ENCODE measurements at regions of chr17 and their contacts with region 1.

Region 1: GRCh38 chr17:67491009-67491680 is 114.1 kb downstream of the PITPNC1 start:
- DNase-seq: peak; percentile 72
- H3K4me3 ChIP-seq: peak overlapping the region in 1 of 4 donors; percentile 7
- H3K27ac ChIP-seq: peak overlapping the region; percentile 46 to 67 (median 56)
- H3K4me1 ChIP-seq: peaks cover 0 to 25% (median 5%) of the 10 kb centered on the region in 4 donors
- H3K27me3 ChIP-seq: no peaks in the 10 kb centered on the region
- CTCF ChIP-seq: no peak
- EP300 ChIP-seq: peak; percentile 95
- POLR2A ChIP-seq: no peak

Region 2: GRCh38 chr17:67293251-67294203 is 197.6 kb before region 1 on chr17:
- in situ Hi-C with region 1: no loop called
- intact Hi-C with region 1: no loop called
- DNase-seq: peak; percentile 74
- H3K4me3 ChIP-seq: peak overlapping the region in 1 of 4 donors; percentile 18
- H3K27ac ChIP-seq: no peak overlapping the region
- H3K4me1 ChIP-seq: peaks cover 0 to 14% (median 0%) of the 10 kb centered on the region in 4 donors
- H3K27me3 ChIP-seq: no peaks in the 10 kb centered on the region
- CTCF ChIP-seq: peak; percentile 68 to 83 (median 77)
- EP300 ChIP-seq: no peak
- POLR2A ChIP-seq: no peak

Region 3: GRCh38 chr17:67733371-67733940 is 242.3 kb after region 1 on chr17:
- in situ Hi-C with region 1: no loop called
- intact Hi-C with region 1: no loop called
- DNase-seq: no peak
- H3K4me3 ChIP-seq: no peak overlapping the region
- H3K27ac ChIP-seq: no peak overlapping the region
- H3K4me1 ChIP-seq: no peaks in the 10 kb centered on the region
- H3K27me3 ChIP-seq: no peaks in the 10 kb centered on the region
- CTCF ChIP-seq: no peak
- EP300 ChIP-seq: no peak
- POLR2A ChIP-seq: no peak

Region 4: GRCh38 chr17:68004201-68004600 is 513.1 kb after region 1 on chr17:
- in situ Hi-C with region 1: no loop called
- intact Hi-C with region 1: loop called (anchors 5 kb)
- DNase-seq: no peak
- H3K4me3 ChIP-seq: no peak overlapping the region
- H3K27ac ChIP-seq: no peak overlapping the region
- H3K4me1 ChIP-seq: no peaks in the 10 kb centered on the region
- H3K27me3 ChIP-seq: no peaks in the 10 kb centered on the region
- CTCF ChIP-seq: no peak
- EP300 ChIP-seq: no peak
- POLR2A ChIP-seq: no peak